Activated CD4-positive, alpha-beta T cell treated with anti-CD3 and anti-CD28 coated beads for 36 hours (primary cell): ENCODE measurements at regions of chr7 and their contacts with region 1.

Region 1: GRCh38 chr7:94087664-94088352 is 83.7 kb upstream of the BET1 start:
- DNase-seq: peak; percentile 60
- ATAC-seq: peak; percentile 89
- H3K4me3 Mint-ChIP-seq: peak overlapping the region; percentile 29
- H3K27ac Mint-ChIP-seq: no peak overlapping the region
- H3K4me1 Mint-ChIP-seq: peaks cover 10% of the 10 kb centered on the region
- H3K27me3 Mint-ChIP-seq: peaks cover 22% of the 10 kb centered on the region

Region 2: GRCh38 chr7:93245525-93246432 is 842.0 kb before region 1 on chr7:
- CTCF ChIA-PET with region 1: interaction called, 5 read pairs
- POLR2A ChIA-PET with region 1: no interaction called
- intact Hi-C with region 1: loop called (anchors 1 to 5 kb)
- DNase-seq: no peak
- ATAC-seq: no peak
- H3K4me3 Mint-ChIP-seq: no peak overlapping the region
- H3K27ac Mint-ChIP-seq: no peak overlapping the region
- H3K4me1 Mint-ChIP-seq: peaks cover 11% of the 10 kb centered on the region
- H3K27me3 Mint-ChIP-seq: no peaks in the 10 kb centered on the region

Region 3: DNA sequence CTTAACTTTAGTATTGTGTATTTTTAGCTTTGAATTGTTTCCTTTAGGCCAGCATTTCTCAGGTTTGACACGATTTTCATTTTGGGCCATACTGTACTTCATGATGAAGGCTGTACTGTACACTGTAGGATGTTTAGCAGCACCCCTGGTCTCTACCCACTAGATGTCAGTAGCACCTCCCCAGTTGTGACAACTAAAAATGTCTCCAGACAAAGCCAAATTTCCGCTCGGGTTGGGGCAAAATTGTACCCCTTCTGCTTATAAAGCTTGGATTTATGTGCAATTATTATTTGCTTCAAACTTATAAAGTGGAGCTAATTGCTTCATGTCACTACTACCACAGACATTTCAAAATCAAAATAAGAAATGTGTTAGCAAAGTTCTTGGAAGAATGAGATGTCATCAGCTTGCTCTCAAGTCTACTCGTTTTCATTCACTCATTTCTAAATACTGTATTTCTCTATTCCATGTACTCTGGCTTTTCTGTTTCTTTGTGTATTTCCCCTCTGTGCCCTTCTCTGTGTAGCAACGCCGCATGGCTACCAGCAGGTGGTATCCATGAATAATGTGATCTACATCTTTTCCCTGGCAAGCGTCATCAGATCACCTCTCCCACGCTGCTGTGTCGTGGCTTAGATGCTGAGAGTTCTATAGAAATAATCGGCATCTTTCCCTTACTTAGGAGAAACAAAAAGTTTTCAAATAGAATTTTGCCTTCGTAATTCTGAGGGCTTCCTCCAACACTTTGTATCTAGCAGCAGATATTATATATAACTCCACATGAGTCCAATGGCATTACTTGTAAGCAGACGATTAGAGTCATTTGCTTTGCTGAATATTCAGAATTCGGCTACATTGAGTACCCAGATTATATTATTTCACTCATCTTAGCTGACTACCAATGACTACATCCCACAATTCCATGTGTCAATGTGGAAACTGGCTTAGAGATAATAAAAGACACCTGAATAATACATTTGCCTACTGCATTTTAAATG is 465.5 kb before region 1 on chr7:
- CTCF ChIA-PET with region 1: no interaction called
- POLR2A ChIA-PET with region 1: no interaction called
- intact Hi-C with region 1: loop called in 1 of 2 experiments (anchors 5 kb)
- DNase-seq: no peak
- ATAC-seq: no peak
- H3K4me3 Mint-ChIP-seq: no peak overlapping the region
- H3K27ac Mint-ChIP-seq: no peak overlapping the region
- H3K4me1 Mint-ChIP-seq: no peaks in the 10 kb centered on the region
- H3K27me3 Mint-ChIP-seq: no peaks in the 10 kb centered on the region

Region 4: GRCh38 chr7:93799750-93800357 is 288.0 kb before region 1 on chr7:
- CTCF ChIA-PET with region 1: no interaction called
- POLR2A ChIA-PET with region 1: no interaction called
- intact Hi-C with region 1: loop called in 1 of 2 experiments (anchors 5 kb)
- DNase-seq: no peak
- ATAC-seq: no peak
- H3K4me3 Mint-ChIP-seq: no peak overlapping the region
- H3K27ac Mint-ChIP-seq: no peak overlapping the region
- H3K4me1 Mint-ChIP-seq: no peaks in the 10 kb centered on the region
- H3K27me3 Mint-ChIP-seq: peaks cover 2% of the 10 kb centered on the region

Region 5: DNA sequence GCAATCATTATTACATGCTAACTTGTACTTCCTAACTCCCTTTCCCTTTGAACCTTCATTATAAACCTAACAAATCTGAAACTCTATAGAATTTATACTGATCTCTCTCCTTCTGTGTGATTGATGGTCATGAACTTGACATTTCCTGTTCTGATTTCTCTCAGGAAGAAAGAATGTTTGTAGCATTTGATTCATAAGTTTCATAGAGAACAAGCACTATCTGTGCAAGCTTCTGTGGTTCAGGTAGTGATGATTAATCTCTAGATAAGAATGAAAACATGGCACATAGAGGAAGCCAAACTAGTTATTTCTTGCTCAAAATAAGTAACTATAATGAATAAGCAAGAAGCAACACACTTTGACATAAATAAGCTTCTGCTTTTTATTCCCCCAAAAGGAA is 231.5 kb before region 1 on chr7:
- CTCF ChIA-PET with region 1: no interaction called
- POLR2A ChIA-PET with region 1: no interaction called
- intact Hi-C with region 1: no loop called
- DNase-seq: no peak
- ATAC-seq: peak; percentile 65
- H3K4me3 Mint-ChIP-seq: no peak overlapping the region
- H3K27ac Mint-ChIP-seq: no peak overlapping the region
- H3K4me1 Mint-ChIP-seq: no peaks in the 10 kb centered on the region
- H3K27me3 Mint-ChIP-seq: peaks cover 15% of the 10 kb centered on the region

Region 6: DNA sequence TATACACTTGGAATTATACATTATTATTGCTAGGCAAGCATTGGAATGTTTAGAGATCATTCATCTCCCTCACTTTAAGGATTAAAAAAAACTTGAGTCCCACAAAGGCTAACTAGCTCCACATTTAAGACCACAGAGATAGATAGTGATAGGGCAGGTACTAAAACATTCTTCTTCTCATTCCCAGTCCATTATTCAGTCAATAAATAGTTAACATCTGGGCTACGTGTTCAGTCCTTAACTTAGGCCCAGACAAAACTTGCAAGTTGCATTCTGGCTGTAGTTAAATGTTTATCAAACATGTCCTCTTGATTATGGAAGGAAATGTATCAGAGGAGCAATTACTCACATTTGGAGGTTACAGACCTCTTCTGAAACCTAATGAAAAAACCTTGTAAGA is 163.9 kb before region 1 on chr7:
- CTCF ChIA-PET with region 1: no interaction called
- POLR2A ChIA-PET with region 1: no interaction called
- intact Hi-C with region 1: no loop called
- DNase-seq: no peak
- ATAC-seq: no peak
- H3K4me3 Mint-ChIP-seq: no peak overlapping the region
- H3K27ac Mint-ChIP-seq: no peak overlapping the region
- H3K4me1 Mint-ChIP-seq: no peaks in the 10 kb centered on the region
- H3K27me3 Mint-ChIP-seq: peaks cover 32% of the 10 kb centered on the region

Region 7: GRCh38 chr7:94004024-94004951 is 83.5 kb before region 1 on chr7 and contains the start of gene BET1:
- CTCF ChIA-PET with region 1: interaction called, 3 read pairs
- POLR2A ChIA-PET with region 1: no interaction called
- intact Hi-C with region 1: loop called (anchors 1 to 5 kb)
- DNase-seq: peak; percentile 95
- ATAC-seq: peak; percentile 96
- H3K4me3 Mint-ChIP-seq: peak within 1 kb of the TSS; percentile 98
- H3K27ac Mint-ChIP-seq: peak within 1 kb of the TSS; percentile 97
- H3K4me1 Mint-ChIP-seq: peaks cover 36% of the 10 kb centered on the region
- H3K27me3 Mint-ChIP-seq: peaks cover 6% of the 10 kb centered on the region
- total RNA-seq, gene BET1: 16.9 to 19.8 TPM

Region 8: GRCh38 chr7:94618126-94618525 is 530.3 kb after region 1 on chr7:
- CTCF ChIA-PET with region 1: no interaction called
- POLR2A ChIA-PET with region 1: no interaction called
- intact Hi-C with region 1: no loop called
- DNase-seq: no peak
- ATAC-seq: no peak
- H3K4me3 Mint-ChIP-seq: no peak overlapping the region
- H3K27ac Mint-ChIP-seq: no peak overlapping the region
- H3K4me1 Mint-ChIP-seq: peaks cover 10% of the 10 kb centered on the region
- H3K27me3 Mint-ChIP-seq: peaks cover 4% of the 10 kb centered on the region